BJ (cell line): ENCODE measurements at regions of chr3 and their contacts with region 1.

Region 1: GRCh38 chr3:111521891-111522290 is 20.1 kb upstream of the CD96 start:
- DNase-seq: peak; percentile 39
- H3K4me3 ChIP-seq: no peak overlapping the region
- H3K27me3 ChIP-seq: 0 out of 2 replicates have a peak, but pooled peaks cover 1% of the 10 kb centered on the region
- CTCF ChIP-seq: no peak

Region 2: DNA sequence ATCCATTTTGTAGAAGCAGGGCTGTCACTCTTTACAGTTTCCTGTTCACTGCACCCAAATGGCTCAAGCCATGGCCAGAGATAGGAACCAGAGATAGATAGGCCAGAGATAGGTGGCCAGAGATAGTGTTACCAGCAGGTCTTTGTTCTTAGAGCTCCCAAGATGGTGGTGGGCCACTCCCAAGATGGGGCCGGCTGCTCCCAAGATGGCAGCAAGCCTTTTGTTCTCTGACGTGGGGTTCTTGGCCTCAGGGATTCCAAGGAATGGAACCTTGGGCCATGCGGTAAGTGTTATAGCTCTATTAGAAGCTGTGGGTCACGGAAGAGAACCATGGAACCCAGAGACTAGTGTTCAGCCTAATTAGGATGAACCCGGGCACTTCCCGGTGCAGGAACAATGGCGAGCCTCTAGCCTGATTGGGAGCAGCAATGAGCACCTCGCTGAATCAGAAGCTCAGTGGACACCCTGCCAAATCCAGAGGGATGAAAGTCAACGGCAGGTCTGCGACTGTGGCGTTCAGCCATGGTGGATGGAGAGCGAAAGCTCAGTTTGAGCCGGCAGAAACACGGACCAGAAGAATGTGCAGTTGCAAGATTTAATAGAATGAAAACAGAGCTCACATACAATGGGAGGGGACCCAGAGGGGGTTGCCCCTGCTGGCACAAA is 24.9 kb before region 1 on chr3:
- CTCF ChIA-PET with region 1: no interaction called
- POLR2A ChIA-PET with region 1: no interaction called
- DNase-seq: no peak
- H3K4me3 ChIP-seq: no peak overlapping the region
- H3K27me3 ChIP-seq: peaks cover 3% of the 10 kb centered on the region; the same call in 1 of the 2 replicates
- CTCF ChIP-seq: no peak

Region 3: DNA sequence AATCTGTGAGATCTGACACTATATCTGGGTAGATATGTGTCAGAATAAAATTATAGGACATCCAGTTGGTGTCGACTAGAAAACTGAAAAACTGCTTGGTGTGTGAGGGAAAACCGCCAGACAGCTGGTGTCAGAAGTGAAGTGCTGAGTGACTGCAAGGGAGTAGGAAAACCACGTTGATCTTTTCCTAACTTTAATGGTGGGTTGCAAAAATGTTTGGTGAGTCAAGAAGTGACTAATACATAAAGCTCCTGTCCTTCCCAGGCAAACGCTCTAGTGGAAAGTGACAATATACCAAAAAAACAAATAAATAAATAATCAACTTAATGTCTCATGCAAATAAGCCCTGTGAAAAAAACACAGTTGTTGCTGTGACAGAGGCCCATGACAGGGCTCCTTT is 12.8 kb after region 1 on chr3:
- CTCF ChIA-PET with region 1: interaction called, 13 read pairs
- POLR2A ChIA-PET with region 1: no interaction called
- DNase-seq: peak; percentile 28
- H3K4me3 ChIP-seq: no peak overlapping the region
- H3K27me3 ChIP-seq: no peaks in the 10 kb centered on the region
- CTCF ChIP-seq: no peak